Gastrocnemius medialis (tissue), 4 donors: ENCODE measurements at regions of chr5 and their contacts with region 1.

Region 1: GRCh38 chr5:6448622-6449464 is at the start of gene UBE2QL1:
- DNase-seq: peak in 1 of 2 donors; percentile 38
- ATAC-seq: peak; percentile 13 to 37
- H3K4me3 ChIP-seq: peak within 1 kb of the TSS; percentile 58 to 78 (median 71)
- H3K27ac ChIP-seq: peak within 1 kb of the TSS; percentile 91 to 97 (median 96)
- H3K4me1 ChIP-seq: peaks cover 13 to 17% of the 10 kb centered on the region in 2 donors
- H3K27me3 ChIP-seq: no peaks in the 10 kb centered on the region
- CTCF ChIP-seq: no peak
- POLR2A ChIP-seq: peak; percentile 36 to 71
- total RNA-seq, gene UBE2QL1: 48.8 to 150 (median 67.0) TPM

Region 2: DNA sequence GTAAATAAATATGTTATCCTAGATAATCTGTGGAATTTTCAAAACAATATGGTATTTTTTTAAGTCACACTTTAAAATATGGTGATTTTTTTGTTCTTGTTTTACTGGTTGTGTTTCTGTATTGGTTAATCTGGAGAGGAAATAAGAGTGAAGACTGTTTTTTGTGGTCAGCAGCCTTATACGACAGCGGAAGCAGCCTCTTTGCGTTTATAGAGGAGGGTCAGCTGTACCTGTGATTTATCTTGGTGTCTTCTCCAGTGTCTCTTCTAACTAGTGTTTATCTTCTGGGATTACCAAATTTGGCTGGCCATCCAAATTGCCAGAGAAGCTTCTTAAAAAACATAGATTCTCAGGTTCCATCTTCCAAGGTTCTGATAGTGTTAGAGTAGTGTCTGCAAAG is 967.6 kb before region 1 on chr5:
- in situ Hi-C with region 1: no loop called
- intact Hi-C with region 1: loop called (anchors 5 kb)
- DNase-seq: peak in 1 of 2 donors; percentile 23
- ATAC-seq: peak; percentile 55 to 83
- H3K4me3 ChIP-seq: peak overlapping the region in 1 of 4 donors; percentile 20
- H3K27ac ChIP-seq: peak overlapping the region; percentile 71 to 85 (median 84)
- H3K4me1 ChIP-seq: peaks cover 23 to 28% of the 10 kb centered on the region in 2 donors
- H3K27me3 ChIP-seq: no peaks in the 10 kb centered on the region
- CTCF ChIP-seq: no peak
- POLR2A ChIP-seq: no peak

Region 3: DNA sequence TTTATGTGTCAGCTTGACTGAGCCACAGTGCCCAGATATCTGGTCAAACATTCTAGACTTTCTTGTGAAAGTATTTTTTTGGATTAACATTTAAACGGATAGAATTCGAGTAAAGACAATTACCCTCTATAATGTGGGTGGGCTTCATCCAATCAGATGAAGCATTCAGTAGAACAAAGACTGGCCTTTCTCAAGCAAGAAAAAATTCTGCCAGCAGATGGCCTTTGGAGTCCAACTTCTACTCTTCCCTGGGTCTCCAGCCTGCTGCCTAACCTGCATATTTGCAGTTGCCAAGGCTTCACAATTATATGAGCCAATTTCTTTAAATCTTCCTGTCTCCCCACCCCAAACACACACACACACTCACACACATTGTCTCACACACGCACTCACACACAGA is 156.9 kb before region 1 on chr5:
- in situ Hi-C with region 1: no loop called
- intact Hi-C with region 1: loop called (anchors 10 kb)
- DNase-seq: no peak
- ATAC-seq: no peak
- H3K4me3 ChIP-seq: no peak overlapping the region
- H3K27ac ChIP-seq: no peak overlapping the region
- H3K4me1 ChIP-seq: no peaks in the 10 kb centered on the region
- H3K27me3 ChIP-seq: no peaks in the 10 kb centered on the region
- CTCF ChIP-seq: peak in 1 of 5 experiments; percentile 27
- POLR2A ChIP-seq: no peak

Region 4: GRCh38 chr5:6545770-6546690 is 97.2 kb after region 1 on chr5:
- in situ Hi-C with region 1: loop called in 2 of 4 experiments (anchors 10 kb)
- intact Hi-C with region 1: loop called (anchors 1 kb)
- DNase-seq: peak in 1 of 2 donors; percentile 47
- ATAC-seq: peak; percentile 63 to 64
- H3K4me3 ChIP-seq: peak overlapping the region in 2 of 4 donors; percentile 11 to 34
- H3K27ac ChIP-seq: peak overlapping the region; percentile 80 to 89 (median 85)
- H3K4me1 ChIP-seq: peaks cover 31 to 53% of the 10 kb centered on the region in 2 donors
- H3K27me3 ChIP-seq: no peaks in the 10 kb centered on the region
- CTCF ChIP-seq: no peak
- POLR2A ChIP-seq: no peak

Region 5: DNA sequence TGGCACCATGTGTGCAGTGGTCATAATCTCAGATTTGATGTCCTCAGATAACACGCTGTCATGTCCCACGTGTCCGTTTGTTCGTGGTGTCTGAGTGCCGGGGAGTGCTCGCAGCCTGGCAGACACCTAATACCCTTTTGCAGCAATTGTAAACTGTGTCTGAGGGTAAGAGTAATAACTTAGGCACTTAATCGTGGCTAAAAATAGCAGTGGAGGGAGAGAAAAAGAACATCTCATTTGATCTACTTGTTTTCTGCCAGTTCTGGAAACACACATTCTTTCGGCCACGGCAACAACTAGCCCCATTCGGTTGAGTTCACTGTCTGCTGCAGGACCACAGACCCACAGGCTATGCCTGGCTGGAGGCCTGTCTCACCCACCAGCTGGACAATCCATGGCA is 963.6 kb after region 1 on chr5:
- in situ Hi-C with region 1: no loop called
- intact Hi-C with region 1: loop called (anchors 5 kb)
- DNase-seq: peak; percentile 84 to 93
- ATAC-seq: peak; percentile 89 to 90
- H3K4me3 ChIP-seq: peak overlapping the region; percentile 29 to 49 (median 34)
- H3K27ac ChIP-seq: peak overlapping the region; percentile 88 to 94 (median 92)
- H3K4me1 ChIP-seq: peaks cover 53 to 62% of the 10 kb centered on the region in 2 donors
- H3K27me3 ChIP-seq: no peaks in the 10 kb centered on the region
- CTCF ChIP-seq: no peak
- POLR2A ChIP-seq: no peak